Dorsolateral prefrontal cortex (tissue), 120 donors: ENCODE measurements at regions of chr10 and their contacts with region 1.

Region 1: DNA sequence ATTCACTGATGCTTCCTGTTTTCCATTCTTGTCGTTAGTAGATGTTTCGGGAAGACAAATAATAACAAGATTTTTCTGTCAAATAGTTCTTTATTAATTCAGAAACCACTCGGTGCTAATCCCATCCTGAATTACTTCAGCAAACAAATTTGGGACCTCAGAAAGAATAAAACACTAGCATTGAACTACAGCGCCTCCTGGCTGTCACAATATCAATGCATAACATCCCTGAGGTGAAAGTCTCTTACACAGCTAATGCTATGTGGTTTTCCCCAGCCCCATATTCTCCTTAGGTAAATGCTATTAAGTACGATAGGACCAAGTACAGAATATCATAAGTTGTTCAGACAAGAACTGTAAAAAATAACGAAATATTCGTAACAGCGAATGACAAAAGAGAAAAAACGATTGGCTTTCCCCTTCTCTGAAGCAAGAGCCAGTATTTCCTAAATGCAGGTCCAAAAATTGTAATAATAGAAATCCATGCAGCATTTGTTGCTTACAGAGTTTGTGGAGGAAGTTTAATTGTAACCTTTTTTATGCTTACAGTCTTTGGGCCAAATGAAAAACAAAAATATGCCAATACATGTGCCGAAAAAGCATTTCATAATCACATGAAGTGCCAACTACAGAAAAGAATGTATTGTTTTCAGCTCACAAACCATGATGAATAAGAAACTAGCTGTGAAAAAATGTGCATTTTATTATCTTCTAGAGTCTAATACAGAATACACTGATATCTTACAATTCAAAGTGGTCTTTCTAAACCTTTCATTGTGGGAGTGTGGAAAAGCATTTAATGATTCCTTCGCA is 47.3 kb downstream of the MYPN start:
- DNase-seq: peak in 4 of 10 donors; percentile 20 to 72 (median 50)
- H3K4me3 ChIP-seq: no peak overlapping the region
- H3K27ac ChIP-seq: peak overlapping the region in 1 of 59 donors; percentile 9
- H3K27me3 ChIP-seq: no peaks in the 10 kb centered on the region
- CTCF ChIP-seq: peak; percentile 52 to 95 (median 84)

Region 2: GRCh38 chr10:67861750-67862460 is 294.7 kb before region 1 on chr10:
- intact Hi-C with region 1: loop called (anchors 2 to 5 kb)
- DNase-seq: no peak
- H3K4me3 ChIP-seq: no peak overlapping the region
- H3K27ac ChIP-seq: no peak overlapping the region
- H3K27me3 ChIP-seq: no peaks in the 10 kb centered on the region
- CTCF ChIP-seq: no peak

Region 3: GRCh38 chr10:67884313-67884841 is 272.2 kb before region 1 on chr10 and contains the start of gene SIRT1:
- intact Hi-C with region 1: loop called (anchors 10 kb)
- DNase-seq: peak; percentile 94 to 98 (median 96)
- H3K4me3 ChIP-seq: peak within 1 kb of the TSS; percentile 63 to 94 (median 85)
- H3K27ac ChIP-seq: peak within 1 kb of the TSS; percentile 11 to 98 (median 95)
- H3K27me3 ChIP-seq: no peaks in the 10 kb centered on the region
- CTCF ChIP-seq: peak in 38 of 56 donors; percentile 6 to 68 (median 32)
- total RNA-seq, gene SIRT1: 14.8 to 41.9 (median 25.2) TPM

Region 4: DNA sequence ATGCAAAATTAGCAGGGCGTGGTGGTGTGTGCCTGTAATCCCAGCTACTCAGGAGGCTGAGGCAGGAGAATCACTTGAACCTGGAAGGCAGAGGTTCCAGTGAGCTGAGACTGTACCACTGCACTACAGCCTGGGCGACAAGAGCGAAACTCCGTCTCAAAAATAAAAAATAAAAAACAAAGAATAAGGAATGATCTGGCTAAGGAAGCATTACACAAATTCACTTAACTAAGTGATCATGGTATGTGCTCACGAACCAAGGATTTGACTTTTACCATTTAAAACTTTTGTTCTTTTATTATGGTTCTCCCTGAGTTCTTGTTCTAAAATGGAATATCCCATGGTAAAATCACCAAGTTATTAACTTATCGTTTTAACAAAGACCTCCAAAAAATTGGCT is 201.0 kb before region 1 on chr10:
- intact Hi-C with region 1: no loop called
- DNase-seq: no peak
- H3K4me3 ChIP-seq: no peak overlapping the region
- H3K27ac ChIP-seq: no peak overlapping the region
- H3K27me3 ChIP-seq: no peaks in the 10 kb centered on the region
- CTCF ChIP-seq: no peak

Region 5: GRCh38 chr10:68082872-68083271 is 73.7 kb before region 1 on chr10:
- intact Hi-C with region 1: loop called (anchors 5 to 10 kb)
- DNase-seq: no peak
- H3K4me3 ChIP-seq: no peak overlapping the region
- H3K27ac ChIP-seq: peak overlapping the region in 27 of 59 donors; percentile 6 to 80 (median 42)
- H3K27me3 ChIP-seq: no peaks in the 10 kb centered on the region
- CTCF ChIP-seq: peak; percentile 27 to 74 (median 56)

Region 6: GRCh38 chr10:68105820-68106219 is 50.8 kb before region 1 on chr10:
- intact Hi-C with region 1: no loop called
- DNase-seq: no peak
- H3K4me3 ChIP-seq: no peak overlapping the region
- H3K27ac ChIP-seq: no peak overlapping the region
- H3K27me3 ChIP-seq: no peaks in the 10 kb centered on the region
- CTCF ChIP-seq: no peak

Region 7: DNA sequence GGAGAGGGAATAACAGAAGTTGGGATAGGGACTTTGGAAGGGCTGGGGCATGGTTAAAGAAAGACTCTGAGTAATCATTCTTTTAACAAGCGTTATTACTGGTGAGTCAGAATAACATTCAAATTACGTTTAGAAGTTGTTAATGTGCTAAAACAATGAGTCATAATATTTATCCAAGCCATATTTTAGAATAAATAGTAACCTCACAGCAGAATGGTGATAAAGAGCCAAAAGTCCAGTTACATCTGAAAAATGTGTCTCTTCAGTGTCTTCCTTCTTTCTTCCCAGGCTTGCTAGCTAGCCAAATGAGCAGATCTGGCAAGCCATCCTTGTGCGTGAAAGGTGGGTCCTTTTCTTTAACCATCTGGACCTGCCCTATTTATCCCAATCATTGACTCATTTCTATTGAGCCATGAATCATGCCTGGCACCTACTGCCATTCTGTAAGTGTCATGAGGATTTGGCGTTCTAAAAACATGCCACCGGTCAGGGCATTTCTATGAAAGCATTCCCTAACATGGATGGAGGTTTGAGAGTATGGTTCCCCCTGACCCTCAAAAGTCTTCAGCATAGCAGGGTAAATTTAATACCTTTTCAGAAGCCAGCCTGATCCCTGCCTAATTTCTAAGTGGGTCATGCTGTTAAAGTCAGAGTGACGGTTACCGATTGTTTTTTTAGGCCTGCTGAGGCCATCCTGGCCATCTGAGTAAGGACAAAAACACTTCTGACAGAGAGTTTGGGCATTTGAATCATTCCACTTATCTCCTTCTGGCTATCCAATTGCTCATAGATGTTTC is 20.5 kb before region 1 on chr10:
- intact Hi-C with region 1: no loop called
- DNase-seq: peak in 1 of 10 donors; percentile 11
- H3K4me3 ChIP-seq: no peak overlapping the region
- H3K27ac ChIP-seq: peak overlapping the region in 4 of 59 donors; percentile 7 to 55 (median 13)
- H3K27me3 ChIP-seq: no peaks in the 10 kb centered on the region
- CTCF ChIP-seq: no peak

Region 8: GRCh38 chr10:68208424-68209042 is 52.0 kb after region 1 on chr10:
- intact Hi-C with region 1: loop called in 1 of 2 experiments (anchors 5 kb)
- DNase-seq: peak in 9 of 10 donors; percentile 29 to 73 (median 58)
- H3K4me3 ChIP-seq: no peak overlapping the region
- H3K27ac ChIP-seq: no peak overlapping the region
- H3K27me3 ChIP-seq: no peaks in the 10 kb centered on the region
- CTCF ChIP-seq: peak in 53 of 56 donors; percentile 30 to 74 (median 57)

Region 9: GRCh38 chr10:68251625-68252495 is 95.3 kb after region 1 on chr10:
- intact Hi-C with region 1: no loop called
- DNase-seq: no peak
- H3K4me3 ChIP-seq: no peak overlapping the region
- H3K27ac ChIP-seq: no peak overlapping the region
- H3K27me3 ChIP-seq: no peaks in the 10 kb centered on the region
- CTCF ChIP-seq: no peak